ENCODE measurements at regions of chr13 and their contacts with region 1.

Region 1: DNA sequence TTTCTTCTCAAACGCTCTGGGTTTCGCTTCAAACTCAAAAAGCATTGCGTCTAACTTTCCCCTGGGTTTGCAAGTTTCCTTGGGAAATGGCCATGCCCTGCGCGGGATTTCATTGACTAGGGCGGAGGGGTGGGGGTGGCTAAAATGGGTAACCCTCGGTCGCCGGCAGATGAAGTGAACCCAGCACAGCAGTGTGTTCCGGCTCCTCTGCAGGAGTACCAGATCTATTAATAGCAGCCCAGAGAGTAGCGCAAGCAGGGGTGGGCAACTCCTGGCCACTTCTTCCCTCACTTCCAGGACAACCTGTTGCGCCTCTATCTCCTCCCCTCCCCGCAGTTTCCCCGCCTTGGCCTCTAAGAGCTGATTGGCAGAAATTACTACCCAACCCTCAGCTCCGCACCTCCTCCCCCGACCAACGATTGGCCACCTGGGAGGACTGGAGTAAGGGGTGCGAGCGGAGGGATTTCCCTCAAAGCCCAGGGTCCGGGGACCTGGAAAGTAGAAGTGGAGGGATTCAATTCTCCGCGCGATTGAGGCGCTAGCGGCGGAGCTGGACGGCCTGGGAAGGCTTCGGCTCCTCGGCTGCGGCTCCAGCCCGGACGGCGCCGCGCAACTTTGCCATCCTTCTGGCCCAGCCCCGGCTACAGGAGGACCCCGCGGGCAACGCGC is at the start of gene FREM2:
- DNase-seq: peak; percentile 37
- ATAC-seq: peak; percentile 74
- total RNA-seq, gene FREM2: 0.03 TPM

Region 2: DNA sequence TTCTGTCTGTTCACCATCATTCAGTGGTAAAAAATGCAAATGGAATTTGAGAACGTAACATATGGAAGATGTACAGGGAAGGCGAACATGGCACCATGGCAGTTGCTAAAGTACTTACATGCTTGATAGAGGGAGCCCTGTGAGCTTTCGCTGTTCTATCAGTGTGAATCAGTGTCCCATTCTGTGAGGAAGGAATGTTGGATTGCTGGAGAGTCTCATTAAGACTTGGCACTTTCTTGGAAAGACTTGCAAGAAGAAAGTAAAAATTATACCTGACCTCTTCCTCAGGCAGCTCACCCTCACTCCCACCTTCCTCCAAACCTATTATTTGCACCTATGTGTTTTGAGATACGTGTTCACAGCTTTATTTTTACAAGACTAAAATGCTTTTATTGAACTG is 43.6 kb after region 1 on chr13:
- intact Hi-C with region 1: no loop called
- DNase-seq: no peak
- ATAC-seq: no peak

Region 3: DNA sequence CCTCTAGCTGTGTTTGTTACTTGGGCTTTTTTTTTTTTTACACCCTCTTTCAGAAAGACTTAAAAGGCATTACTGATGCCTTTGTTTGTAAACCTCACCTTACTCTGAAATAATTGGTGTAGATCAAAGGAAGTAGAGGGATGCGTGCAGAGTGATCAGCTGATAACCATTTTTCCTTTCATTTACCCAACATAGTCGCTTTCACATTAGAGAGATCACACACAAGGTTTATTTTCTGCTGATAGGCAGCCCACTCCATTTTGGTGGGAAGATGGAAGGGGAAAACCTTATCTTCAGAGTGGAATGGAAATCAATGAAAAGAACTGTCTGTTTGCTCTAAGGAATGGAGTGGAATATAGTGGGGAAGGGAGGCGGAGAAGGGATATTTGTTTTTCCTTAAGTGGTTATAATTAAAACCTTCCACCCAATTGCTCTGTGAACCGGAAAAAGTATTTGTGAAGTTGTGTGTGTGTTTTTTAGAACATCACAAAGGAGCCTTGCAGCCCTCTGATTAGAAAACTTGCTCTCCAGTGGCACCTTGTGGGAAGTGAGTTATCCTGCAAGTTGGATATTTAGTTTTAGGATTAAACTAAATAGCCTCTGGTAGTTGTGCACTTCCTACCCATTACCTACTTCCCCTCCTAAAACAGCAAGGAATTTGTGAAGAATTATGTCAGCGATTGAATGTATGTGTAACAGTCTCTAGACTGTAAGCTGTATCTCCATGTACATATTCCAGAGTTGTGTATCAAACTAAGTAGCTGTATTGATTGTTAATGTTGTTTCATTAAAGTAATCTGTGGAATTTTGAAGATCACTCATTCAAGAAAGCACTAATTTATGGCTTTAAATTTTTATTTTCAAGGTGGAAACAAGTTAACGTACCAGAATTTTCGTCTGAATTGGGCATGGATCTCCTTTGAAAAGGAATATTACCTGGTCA is 77.0 kb after region 1 on chr13:
- intact Hi-C with region 1: loop called (anchors 5 kb)
- DNase-seq: no peak
- ATAC-seq: no peak

Region 4: GRCh38 chr13:40653527-40654318 is 1967.0 kb after region 1 on chr13:
- intact Hi-C with region 1: no loop called
- DNase-seq: no peak
- ATAC-seq: no peak

Measured in Right ventricle myocardium superior (tissue), 1 donor.